Activated B cell treated with CpG ODN at 0.5 μM for 24 hours (primary cell): ENCODE measurements at regions of chr9 and their contacts with region 1.

Region 1: GRCh38 chr9:27377147-27377807 is 80.3 kb upstream of the EQTN start:
- DNase-seq: no peak
- ATAC-seq: peak; percentile 15
- H3K4me3 Mint-ChIP-seq: peak overlapping the region; percentile 68
- H3K27ac Mint-ChIP-seq: peak overlapping the region; percentile 88
- H3K4me1 Mint-ChIP-seq: peaks cover 72% of the 10 kb centered on the region
- H3K27me3 Mint-ChIP-seq: no peaks in the 10 kb centered on the region
- CTCF ChIP-seq: no peak

Region 2: DNA sequence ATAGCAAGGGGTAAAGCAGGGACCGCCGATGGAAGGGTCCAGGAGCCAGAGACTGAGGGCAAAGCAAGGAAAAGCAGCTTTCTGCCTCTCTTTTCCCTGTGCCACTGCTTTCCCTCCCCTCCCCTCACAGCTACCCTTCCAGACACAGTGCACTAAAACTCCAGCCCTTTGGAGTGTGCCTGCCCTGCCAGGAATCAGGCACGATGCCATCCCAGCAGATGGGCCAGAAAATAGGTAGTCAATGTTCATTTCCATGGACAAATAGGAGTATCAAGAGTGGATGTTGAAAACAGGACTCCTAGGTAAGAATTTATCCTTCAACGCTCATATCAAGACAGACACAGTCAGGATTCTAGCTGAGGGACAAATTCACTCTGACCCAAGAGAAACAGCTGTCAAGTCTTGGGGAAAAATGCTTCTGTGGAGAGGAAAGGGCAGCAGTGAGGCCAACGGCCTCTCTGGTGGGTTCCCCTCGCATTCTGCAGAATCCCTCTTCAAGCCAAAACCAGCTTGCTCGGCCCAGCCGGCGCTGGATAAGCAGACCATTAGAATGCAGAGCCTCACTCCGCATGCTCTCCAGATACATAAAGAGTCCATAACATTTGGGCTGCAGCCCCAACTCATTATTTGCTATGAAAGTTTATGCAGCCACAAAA is 622.6 kb before region 1 on chr9:
- CTCF ChIA-PET with region 1: no interaction called
- POLR2A ChIA-PET with region 1: no interaction called
- intact Hi-C with region 1: no loop called
- DNase-seq: no peak
- ATAC-seq: no peak
- H3K4me3 Mint-ChIP-seq: no peak overlapping the region
- H3K27ac Mint-ChIP-seq: no peak overlapping the region
- H3K4me1 Mint-ChIP-seq: no peaks in the 10 kb centered on the region
- H3K27me3 Mint-ChIP-seq: no peaks in the 10 kb centered on the region
- CTCF ChIP-seq: no peak

Region 3: GRCh38 chr9:27292659-27293405 is 84.4 kb before region 1 on chr9:
- CTCF ChIA-PET with region 1: no interaction called
- POLR2A ChIA-PET with region 1: no interaction called
- intact Hi-C with region 1: no loop called
- DNase-seq: no peak
- ATAC-seq: no peak
- H3K4me3 Mint-ChIP-seq: no peak overlapping the region
- H3K27ac Mint-ChIP-seq: no peak overlapping the region
- H3K4me1 Mint-ChIP-seq: no peaks in the 10 kb centered on the region
- H3K27me3 Mint-ChIP-seq: peaks cover 3% of the 10 kb centered on the region
- CTCF ChIP-seq: no peak

Region 4: DNA sequence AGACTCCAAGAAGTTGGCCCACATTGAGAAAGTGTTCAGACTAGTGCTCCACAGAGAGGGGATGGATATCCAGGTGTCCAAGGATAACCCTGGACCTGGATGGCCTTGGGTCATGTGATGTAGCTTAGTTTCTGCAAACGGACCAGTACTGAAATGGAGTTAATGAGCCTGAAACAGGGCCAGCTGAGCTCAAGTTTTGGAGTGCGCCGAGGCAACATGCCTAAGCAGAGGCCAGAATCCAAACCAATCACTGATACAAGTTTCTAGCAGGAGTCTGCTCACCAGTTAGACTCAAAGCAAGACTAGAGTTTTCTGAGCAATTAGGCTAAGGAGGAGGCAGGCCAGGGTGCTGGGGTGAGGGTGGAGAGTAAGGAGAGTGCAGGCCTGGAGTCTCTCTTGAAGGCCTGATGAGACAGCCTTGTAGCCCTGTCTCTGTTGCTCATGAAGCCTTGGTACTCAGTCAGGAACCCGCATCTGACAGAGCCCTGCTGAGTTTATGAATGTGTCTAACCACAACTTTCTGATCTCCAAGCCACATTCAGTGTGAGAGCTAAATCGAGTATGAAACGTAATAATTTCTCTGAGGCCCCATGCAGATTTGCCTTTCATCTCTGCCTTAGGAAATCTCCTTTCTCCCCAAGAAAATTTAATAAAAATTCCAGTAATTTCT is 11.4 kb before region 1 on chr9:
- CTCF ChIA-PET with region 1: interaction called, 7 read pairs
- POLR2A ChIA-PET with region 1: interaction called, 37 read pairs
- intact Hi-C with region 1: loop called (anchors 1 kb)
- DNase-seq: no peak
- ATAC-seq: peak; percentile 73
- H3K4me3 Mint-ChIP-seq: peak overlapping the region; percentile 65
- H3K27ac Mint-ChIP-seq: peak overlapping the region; percentile 63
- H3K4me1 Mint-ChIP-seq: peaks cover 61% of the 10 kb centered on the region
- H3K27me3 Mint-ChIP-seq: no peaks in the 10 kb centered on the region
- CTCF ChIP-seq: no peak

Region 5: GRCh38 chr9:27407986-27408385 is 30.7 kb after region 1 on chr9:
- CTCF ChIA-PET with region 1: no interaction called
- POLR2A ChIA-PET with region 1: no interaction called
- intact Hi-C with region 1: loop called (anchors 2 kb)
- DNase-seq: no peak
- ATAC-seq: no peak
- H3K4me3 Mint-ChIP-seq: no peak overlapping the region
- H3K27ac Mint-ChIP-seq: no peak overlapping the region
- H3K4me1 Mint-ChIP-seq: peaks cover 29% of the 10 kb centered on the region
- H3K27me3 Mint-ChIP-seq: no peaks in the 10 kb centered on the region
- CTCF ChIP-seq: no peak

Region 6: GRCh38 chr9:27441741-27442070 is 64.4 kb after region 1 on chr9:
- CTCF ChIA-PET with region 1: no interaction called
- POLR2A ChIA-PET with region 1: interaction called, 7 read pairs
- intact Hi-C with region 1: loop called (anchors 1 kb)
- DNase-seq: no peak
- ATAC-seq: peak; percentile 98
- H3K4me3 Mint-ChIP-seq: peak overlapping the region; percentile 32
- H3K27ac Mint-ChIP-seq: peak overlapping the region; percentile 75
- H3K4me1 Mint-ChIP-seq: peaks cover 69% of the 10 kb centered on the region
- H3K27me3 Mint-ChIP-seq: no peaks in the 10 kb centered on the region
- CTCF ChIP-seq: no peak

Region 7: DNA sequence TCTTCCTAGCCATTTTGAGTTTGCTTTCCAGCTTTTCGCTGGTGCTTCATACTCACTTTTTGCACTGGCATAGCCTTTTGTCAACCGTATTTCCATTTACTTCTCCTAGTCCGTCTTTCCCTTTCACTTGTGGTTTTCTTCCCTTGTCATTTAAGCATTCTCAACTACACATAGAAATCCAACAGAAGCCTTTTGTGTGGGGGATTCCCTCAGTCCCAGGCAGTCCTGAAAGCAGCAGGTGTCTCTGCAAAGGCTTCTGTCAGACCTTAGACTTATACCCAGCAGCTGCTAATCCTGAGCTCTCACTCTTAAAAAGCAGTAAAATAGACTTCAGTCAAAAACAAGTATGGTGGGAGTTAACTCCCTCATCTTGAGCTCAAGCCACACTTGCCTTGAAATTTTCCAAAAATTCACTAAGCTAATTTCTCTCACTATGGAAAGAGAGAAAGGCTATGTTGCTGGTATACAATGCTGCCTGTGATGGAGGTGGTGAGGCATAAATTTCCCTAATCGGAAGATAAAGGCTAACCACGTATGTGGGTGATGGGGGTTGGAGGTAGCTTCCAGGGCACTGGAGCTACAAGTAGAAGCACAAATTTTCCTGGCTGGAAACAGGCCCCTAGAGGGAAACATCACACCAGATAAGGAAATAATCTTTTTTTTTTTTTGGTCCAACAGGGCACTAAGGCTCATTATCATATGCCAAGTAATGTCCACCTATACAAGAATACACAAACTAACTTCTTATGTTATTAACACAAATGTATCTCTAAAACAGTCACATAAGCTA is 112.0 kb after region 1 on chr9:
- CTCF ChIA-PET with region 1: no interaction called
- POLR2A ChIA-PET with region 1: interaction called, 9 read pairs
- intact Hi-C with region 1: loop called (anchors 1 kb)
- DNase-seq: no peak
- ATAC-seq: peak; percentile 40
- H3K4me3 Mint-ChIP-seq: peak overlapping the region; percentile 20
- H3K27ac Mint-ChIP-seq: peak overlapping the region; percentile 46
- H3K4me1 Mint-ChIP-seq: peaks cover 78% of the 10 kb centered on the region
- H3K27me3 Mint-ChIP-seq: no peaks in the 10 kb centered on the region
- CTCF ChIP-seq: no peak

Region 8: DNA sequence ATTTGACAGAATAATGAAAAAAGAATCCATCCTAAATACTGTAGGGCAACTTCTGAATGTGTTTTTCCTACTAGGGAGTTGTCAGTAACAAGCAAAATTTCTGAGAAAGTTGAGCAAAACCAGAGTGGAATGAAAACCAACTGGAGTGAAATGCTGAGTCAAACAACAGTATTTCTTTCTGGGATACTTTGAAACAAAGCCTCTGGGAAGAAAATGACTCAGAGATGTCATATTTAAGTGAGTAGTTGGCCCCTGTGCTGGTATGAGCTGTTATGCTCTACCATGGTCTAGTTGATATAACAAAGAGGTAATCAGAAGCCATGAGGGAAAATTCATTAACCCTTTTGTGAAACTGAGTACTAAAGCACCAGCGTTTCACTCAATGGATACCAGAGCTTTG is 568.1 kb after region 1 on chr9:
- CTCF ChIA-PET with region 1: no interaction called
- POLR2A ChIA-PET with region 1: no interaction called
- intact Hi-C with region 1: no loop called
- DNase-seq: no peak
- ATAC-seq: no peak
- H3K4me3 Mint-ChIP-seq: no peak overlapping the region
- H3K27ac Mint-ChIP-seq: no peak overlapping the region
- H3K4me1 Mint-ChIP-seq: no peaks in the 10 kb centered on the region
- H3K27me3 Mint-ChIP-seq: no peaks in the 10 kb centered on the region
- CTCF ChIP-seq: no peak